ENCODE measurements at regions of chr13 and their contacts with region 1.

Region 1: DNA sequence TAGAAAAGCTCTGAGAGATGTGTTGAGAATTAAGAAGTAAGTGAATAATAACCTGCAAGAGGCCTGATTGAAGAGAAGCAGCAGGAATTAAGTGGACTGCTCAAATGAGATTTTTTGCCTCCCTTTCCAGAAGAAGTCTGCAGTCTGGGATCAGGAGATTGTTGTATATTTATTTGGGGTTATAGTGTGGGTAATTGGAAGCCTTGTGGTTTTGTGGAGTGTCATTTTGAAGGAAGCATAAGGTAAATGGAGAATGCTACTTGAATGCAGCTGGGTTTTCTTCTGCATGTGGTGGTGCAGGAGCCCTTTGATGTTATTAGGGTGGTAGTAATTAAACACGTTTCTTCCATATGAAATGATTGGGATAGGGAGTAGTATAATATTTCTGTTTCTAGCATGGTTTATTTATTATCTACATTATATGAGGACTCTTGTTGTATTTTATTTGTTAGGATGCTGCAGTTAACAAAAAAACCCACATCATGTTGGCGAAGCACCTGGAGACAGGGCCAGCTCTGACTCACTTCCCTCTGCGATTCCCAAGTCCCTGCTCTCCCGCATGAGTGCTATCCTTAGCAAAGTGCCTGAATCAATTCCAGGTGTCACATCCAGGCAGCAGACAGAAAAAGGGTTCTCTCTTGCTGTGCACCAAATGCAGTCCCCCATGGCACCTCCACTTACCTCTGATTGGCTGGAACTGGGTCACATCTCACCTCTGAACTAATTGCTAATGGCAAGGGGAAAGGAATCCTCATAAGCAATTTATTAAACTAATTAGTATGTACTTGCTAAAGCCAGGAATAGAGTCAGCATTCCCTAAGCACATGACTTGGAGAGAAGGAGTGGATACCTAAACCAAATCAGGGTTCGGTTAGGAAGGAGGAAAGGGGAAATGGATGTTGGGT is 54.8 kb downstream of the DGKH start:
- DNase-seq: no peak
- H3K4me3 ChIP-seq: no peak overlapping the region
- H3K27ac ChIP-seq: no peak overlapping the region
- H3K4me1 ChIP-seq: no peaks in the 10 kb centered on the region
- H3K27me3 ChIP-seq: no peaks in the 10 kb centered on the region
- CTCF ChIP-seq: no peak
- POLR2A ChIP-seq: no peak

Region 2: GRCh38 chr13:41681587-41681986 is 421.6 kb before region 1 on chr13:
- intact Hi-C with region 1: loop called (anchors 10 kb)
- DNase-seq: no peak
- H3K4me3 ChIP-seq: no peak overlapping the region
- H3K27ac ChIP-seq: no peak overlapping the region
- H3K4me1 ChIP-seq: no peaks in the 10 kb centered on the region
- H3K27me3 ChIP-seq: no peaks in the 10 kb centered on the region
- CTCF ChIP-seq: no peak
- POLR2A ChIP-seq: no peak

Region 3: GRCh38 chr13:42125046-42125445 is 21.8 kb after region 1 on chr13:
- intact Hi-C with region 1: no loop called
- DNase-seq: no peak
- H3K4me3 ChIP-seq: no peak overlapping the region
- H3K27ac ChIP-seq: no peak overlapping the region
- H3K4me1 ChIP-seq: no peaks in the 10 kb centered on the region
- H3K27me3 ChIP-seq: no peaks in the 10 kb centered on the region
- CTCF ChIP-seq: no peak
- POLR2A ChIP-seq: no peak